Posterior cingulate gyrus (tissue), 11 donors: ENCODE measurements at regions of chr1 and their contacts with region 1.

Region 1: DNA sequence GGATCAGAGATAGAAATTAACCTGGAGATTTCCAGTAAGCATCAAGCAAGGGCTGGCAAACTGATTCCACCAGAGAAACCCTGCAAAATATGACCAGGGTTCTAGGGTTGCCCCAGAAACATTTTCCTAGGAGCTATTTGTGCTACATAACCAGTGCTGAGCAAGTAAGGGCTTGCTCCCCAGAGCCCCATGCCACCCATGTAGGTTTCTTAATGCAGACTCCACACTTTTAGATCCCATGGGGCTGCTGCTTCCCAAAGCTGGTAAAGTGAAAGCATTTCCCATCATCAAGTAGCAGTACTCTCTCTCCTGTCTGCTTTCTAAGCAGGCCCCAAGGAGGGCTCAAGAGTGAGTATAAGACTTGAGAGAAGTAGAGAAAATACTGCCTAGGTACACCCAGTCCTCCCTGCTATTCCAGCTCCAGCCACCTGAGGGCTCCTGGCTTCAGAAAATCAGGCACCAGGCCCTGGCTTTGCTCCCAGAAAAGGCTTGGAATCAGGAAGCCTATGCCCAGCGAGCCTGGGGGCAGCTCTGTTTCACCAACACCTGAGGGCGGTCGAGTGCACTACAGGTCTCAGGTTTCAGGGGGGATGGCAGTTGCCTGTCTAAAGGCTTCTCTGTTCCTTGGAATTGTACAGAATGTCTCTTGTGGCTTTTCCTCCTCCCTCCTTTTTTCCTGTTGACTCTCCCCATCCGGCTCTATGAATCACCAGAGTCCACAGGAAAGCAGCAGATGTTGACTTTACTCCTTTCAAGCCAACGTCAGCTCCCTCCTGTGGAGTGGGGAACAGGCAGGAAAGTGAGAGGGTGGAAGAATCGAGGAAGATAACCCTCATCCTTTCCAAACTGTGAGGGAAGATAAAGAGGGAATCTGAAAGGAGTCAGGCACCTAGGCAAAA is 6.2 kb upstream of the ANKRD35 start:
- DNase-seq: peak; percentile 85 to 98 (median 94)

Region 2: GRCh38 chr1:146012737-146013403 is 121.0 kb after region 1 on chr1:
- intact Hi-C with region 1: loop called (anchors 1 kb)
- DNase-seq: peak in 2 of 10 donors; percentile 40 to 51